ENCODE measurements at regions of chr13 and their contacts with region 1.

Region 1: DNA sequence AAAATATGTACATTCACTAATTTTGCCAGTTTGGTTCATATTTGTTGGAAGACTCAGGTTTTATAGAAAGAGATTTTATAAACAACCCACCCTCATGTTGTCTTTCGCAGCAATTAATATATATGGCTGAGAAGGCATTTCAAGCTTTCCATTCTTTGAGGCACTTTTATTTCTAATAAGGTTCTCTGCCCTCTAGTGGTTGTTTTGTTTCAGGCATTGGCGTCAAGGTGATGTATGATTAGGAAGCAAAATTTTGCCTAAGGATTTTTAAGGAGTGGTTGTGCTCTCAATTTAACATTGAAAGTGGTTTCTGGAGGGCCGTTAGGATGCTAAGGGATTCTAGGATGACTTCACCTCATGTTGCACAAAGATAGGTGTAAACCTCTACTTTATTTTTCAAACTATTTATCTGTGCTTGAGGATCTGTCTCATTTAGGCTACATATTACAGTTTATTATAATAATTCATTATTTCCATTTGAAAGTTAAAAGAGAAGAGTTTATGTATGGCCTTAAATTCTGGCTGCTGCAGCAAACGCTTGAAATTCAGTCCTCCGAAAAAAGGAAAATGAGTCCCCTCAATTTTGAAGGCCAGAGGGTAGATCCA is 35.9 kb downstream of the OXGR1 start:
- DNase-seq: no peak
- H3K4me3 ChIP-seq: no peak overlapping the region
- H3K27ac ChIP-seq: no peak overlapping the region
- H3K4me1 ChIP-seq: no peaks in the 10 kb centered on the region
- H3K27me3 ChIP-seq: no peaks in the 10 kb centered on the region
- CTCF ChIP-seq: peak in 2 of 3 experiments; percentile 66 to 68

Region 2: GRCh38 chr13:96020155-96020575 is 938.2 kb before region 1 on chr13:
- intact Hi-C with region 1: loop called (anchors 2 kb)
- DNase-seq: no peak
- H3K4me3 ChIP-seq: no peak overlapping the region
- H3K27ac ChIP-seq: no peak overlapping the region
- H3K4me1 ChIP-seq: no peaks in the 10 kb centered on the region
- H3K27me3 ChIP-seq: no peaks in the 10 kb centered on the region
- CTCF ChIP-seq: peak; percentile 30 to 59 (median 40)

Region 3: GRCh38 chr13:96822895-96823294 is 135.5 kb before region 1 on chr13:
- intact Hi-C with region 1: loop called (anchors 5 kb)
- DNase-seq: no peak
- H3K4me3 ChIP-seq: no peak overlapping the region
- H3K27ac ChIP-seq: no peak overlapping the region
- H3K4me1 ChIP-seq: peaks cover 0 to 15% of the 10 kb centered on the region in 2 donors
- H3K27me3 ChIP-seq: no peaks in the 10 kb centered on the region
- CTCF ChIP-seq: peak in 1 of 3 experiments; percentile 12

Region 4: DNA sequence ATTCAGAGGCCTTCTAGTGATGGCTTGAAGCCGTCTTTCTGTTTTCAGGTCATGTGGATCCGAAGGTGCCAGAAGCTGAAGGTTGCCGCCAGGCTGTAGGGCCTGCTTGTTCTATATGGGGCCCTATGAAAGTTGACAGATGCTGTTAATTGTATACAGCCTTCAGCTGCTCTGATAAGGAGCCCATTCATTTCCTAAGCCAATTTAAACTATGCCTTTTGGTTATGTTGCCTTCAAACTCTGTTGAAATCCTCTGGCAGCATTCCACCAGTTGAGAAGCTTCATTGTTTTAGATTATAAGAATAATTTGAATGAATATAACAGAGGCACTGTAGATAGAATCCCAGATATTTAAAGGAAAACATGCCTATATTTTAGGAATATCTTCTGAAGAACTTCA is 509.9 kb after region 1 on chr13:
- intact Hi-C with region 1: no loop called
- DNase-seq: no peak
- H3K4me3 ChIP-seq: no peak overlapping the region
- H3K27ac ChIP-seq: no peak overlapping the region
- H3K4me1 ChIP-seq: no peaks in the 10 kb centered on the region
- H3K27me3 ChIP-seq: no peaks in the 10 kb centered on the region
- CTCF ChIP-seq: no peak

Measured in ascending aorta (tissue), 2 donors.